Activated CD8-positive, alpha-beta memory T cell treated with anti-CD3 and anti-CD28 coated beads, Interleukin-2, amount 10 ng/mL, durations not matched to agents 7 days and 5 days (primary cell): ENCODE measurements at regions of chr6 and their contacts with region 1.

Region 1: GRCh38 chr6:24431045-24431451 is 28.3 kb downstream of the MRS2 start:
- DNase-seq: no peak
- ATAC-seq: no peak
- H3K4me3 Mint-ChIP-seq: no peak overlapping the region
- H3K27ac Mint-ChIP-seq: no peak overlapping the region
- H3K4me1 Mint-ChIP-seq: no peaks in the 10 kb centered on the region
- H3K27me3 Mint-ChIP-seq: no peaks in the 10 kb centered on the region

Region 2: DNA sequence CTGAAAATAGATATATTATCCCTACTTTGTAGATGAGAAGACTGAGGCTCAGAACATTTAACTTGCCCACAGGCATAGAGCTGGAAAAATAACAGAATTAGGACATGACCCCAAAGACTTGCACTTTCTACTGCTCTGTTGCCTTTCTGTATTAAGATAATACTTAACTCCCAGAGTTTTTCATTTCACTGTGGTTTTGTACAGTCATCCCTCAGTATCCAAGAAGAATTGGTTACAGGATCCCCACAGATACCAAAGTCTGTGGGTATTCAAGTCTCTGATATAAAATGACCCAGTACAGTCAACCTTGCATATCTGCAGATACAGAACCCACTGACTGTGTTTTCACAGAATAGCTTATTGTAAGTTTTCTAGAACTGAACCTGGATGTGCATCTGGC is 11.5 kb before region 1 on chr6:
- CTCF ChIA-PET with region 1: interaction called, 13 read pairs
- DNase-seq: no peak
- ATAC-seq: no peak
- H3K4me3 Mint-ChIP-seq: no peak overlapping the region
- H3K27ac Mint-ChIP-seq: no peak overlapping the region
- H3K4me1 Mint-ChIP-seq: no peaks in the 10 kb centered on the region
- H3K27me3 Mint-ChIP-seq: no peaks in the 10 kb centered on the region

Region 3: GRCh38 chr6:24472177-24472576 is 41.1 kb after region 1 on chr6:
- CTCF ChIA-PET with region 1: no interaction called
- DNase-seq: no peak
- ATAC-seq: no peak
- H3K4me3 Mint-ChIP-seq: no peak overlapping the region
- H3K27ac Mint-ChIP-seq: no peak overlapping the region
- H3K4me1 Mint-ChIP-seq: no peaks in the 10 kb centered on the region
- H3K27me3 Mint-ChIP-seq: no peaks in the 10 kb centered on the region